ENCODE measurements at regions of chr1 and their contacts with region 1.

Region 1: DNA sequence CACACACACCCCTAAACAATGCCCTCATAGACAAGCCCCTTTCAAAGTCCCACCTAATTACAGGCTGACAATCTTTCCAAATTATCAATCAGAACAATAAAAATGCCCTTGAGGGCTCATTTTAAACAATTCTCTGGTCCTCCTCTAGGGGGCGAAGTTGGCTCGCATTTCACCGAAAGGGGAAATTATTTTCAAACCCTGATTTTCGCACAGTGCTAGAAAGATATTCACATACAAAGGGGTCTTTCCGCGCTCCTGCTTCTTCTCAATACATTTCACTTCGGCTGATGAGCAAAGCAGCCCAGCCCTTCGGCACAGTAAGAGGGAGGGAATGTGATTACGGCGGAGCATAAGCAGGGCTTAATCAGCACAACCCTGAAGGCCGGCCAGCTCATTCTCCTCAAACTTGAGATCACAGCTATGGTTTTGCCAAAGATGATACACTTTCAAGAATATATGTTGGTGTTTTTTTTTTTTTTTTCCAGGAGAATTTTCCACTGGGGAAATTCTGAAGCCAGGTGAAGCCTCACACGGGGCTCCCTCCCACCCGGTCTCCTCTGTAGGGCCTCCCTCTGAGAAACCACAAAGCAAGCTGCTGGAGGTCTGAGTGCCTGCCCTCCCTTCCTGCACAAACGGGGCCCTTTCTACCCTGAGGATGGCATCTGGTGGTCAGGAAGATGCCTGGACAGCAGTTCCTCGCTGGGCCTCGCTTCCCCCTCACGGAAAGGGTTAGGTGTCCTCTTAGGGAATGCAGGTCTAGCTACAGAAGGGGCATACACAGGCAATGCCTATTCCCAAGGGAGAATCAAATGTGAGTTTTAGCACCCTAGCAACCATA is 66.9 kb downstream of the GNG12 start:
- DNase-seq: no peak
- H3K4me3 ChIP-seq: peak overlapping the region in 3 of 4 donors; percentile 12 to 24 (median 23)
- H3K27ac ChIP-seq: peak overlapping the region in 3 of 4 donors; percentile 25 to 56 (median 50)
- H3K4me1 ChIP-seq: peaks cover 0 to 26% (median 6%) of the 10 kb centered on the region in 4 donors
- H3K27me3 ChIP-seq: no peaks in the 10 kb centered on the region
- CTCF ChIP-seq: peak; percentile 80 to 87 (median 84)
- EP300 ChIP-seq: no peak
- POLR2A ChIP-seq: no peak

Region 2: GRCh38 chr1:67780637-67781036 is 14.3 kb after region 1 on chr1:
- intact Hi-C with region 1: no loop called
- DNase-seq: peak; percentile 77
- H3K4me3 ChIP-seq: no peak overlapping the region
- H3K27ac ChIP-seq: peak overlapping the region in 2 of 4 donors; percentile 1 to 11
- H3K4me1 ChIP-seq: peaks cover 0 to 22% (median 8%) of the 10 kb centered on the region in 4 donors
- H3K27me3 ChIP-seq: no peaks in the 10 kb centered on the region
- CTCF ChIP-seq: no peak
- EP300 ChIP-seq: no peak
- POLR2A ChIP-seq: no peak

Region 3: DNA sequence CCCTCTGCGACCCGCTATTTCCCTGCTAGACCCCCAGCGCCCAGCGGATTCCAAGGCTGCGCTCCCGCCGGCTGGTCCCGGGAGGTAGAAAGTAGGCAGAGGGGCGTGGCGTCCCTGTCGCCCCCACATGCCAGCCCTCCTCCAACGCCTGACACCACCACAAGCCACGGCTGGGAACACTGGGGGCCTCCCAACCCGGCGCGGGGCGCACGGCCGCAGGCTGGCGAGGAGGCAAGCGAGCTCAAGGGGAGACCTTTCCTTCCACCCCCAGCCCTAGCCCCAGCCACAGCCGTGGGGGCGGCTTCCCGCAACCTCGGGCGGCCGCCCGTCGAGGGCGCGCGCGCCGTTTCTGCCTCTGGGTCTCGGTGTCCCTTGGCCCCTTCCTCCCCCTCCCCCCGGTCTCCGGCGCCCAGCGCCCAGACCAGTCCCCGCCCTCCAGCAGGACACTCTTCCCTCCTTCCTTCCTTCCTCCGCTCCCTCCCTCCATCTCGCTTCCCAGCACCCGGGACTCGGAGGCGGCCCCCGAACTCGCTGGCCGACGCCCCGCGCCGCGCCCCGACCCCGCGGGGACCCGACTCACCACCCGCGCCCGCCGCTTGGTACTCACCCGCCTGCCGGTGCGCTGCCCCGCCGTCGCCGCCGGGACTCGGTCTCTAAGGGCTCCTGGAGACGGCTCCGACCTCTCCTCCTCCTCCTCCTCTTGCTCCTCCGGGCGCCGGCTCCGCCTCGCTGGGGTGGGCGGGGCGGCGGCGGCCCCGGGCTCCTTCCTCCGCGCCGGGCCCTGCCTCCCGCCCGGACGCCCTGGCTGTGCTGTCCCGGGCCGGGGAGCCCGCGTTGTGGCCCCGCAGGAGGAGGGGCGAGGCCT is 66.6 kb after region 1 on chr1 and contains the start of gene GNG12:
- intact Hi-C with region 1: loop called (anchors 2 kb)
- DNase-seq: peak; percentile 89
- H3K4me3 ChIP-seq: peak within 1 kb of the TSS; percentile 67 to 78 (median 72)
- H3K27ac ChIP-seq: peak within 1 kb of the TSS; percentile 81 to 92 (median 84)
- H3K4me1 ChIP-seq: peaks cover 0 to 32% (median 18%) of the 10 kb centered on the region in 4 donors
- H3K27me3 ChIP-seq: no peaks in the 10 kb centered on the region
- CTCF ChIP-seq: no peak
- EP300 ChIP-seq: no peak
- POLR2A ChIP-seq: no peak
- total RNA-seq, gene GNG12: 41.9 to 58.2 (median 46.7) TPM

Region 4: DNA sequence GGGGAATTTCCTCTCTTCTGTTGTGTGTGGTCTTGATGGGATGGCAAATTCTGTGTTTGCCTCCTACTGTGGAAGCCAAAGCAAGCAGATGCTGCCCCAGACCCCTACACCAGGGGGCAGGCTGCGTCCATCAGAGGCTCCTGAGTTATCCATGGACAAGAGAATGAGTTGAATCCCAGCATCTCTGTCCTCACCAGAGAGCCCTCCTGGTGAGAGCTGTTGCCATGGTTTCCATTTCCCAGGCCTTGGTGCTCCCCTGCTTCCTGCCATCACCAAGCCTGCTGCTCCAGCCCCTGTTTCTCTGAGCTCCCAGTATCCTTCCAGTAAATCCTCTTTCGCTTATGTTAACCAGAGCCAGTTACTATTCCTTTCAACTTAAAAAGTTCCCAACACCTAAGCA is 87.3 kb after region 1 on chr1:
- intact Hi-C with region 1: loop called (anchors 5 kb)
- DNase-seq: no peak
- H3K4me3 ChIP-seq: no peak overlapping the region
- H3K27ac ChIP-seq: no peak overlapping the region
- H3K4me1 ChIP-seq: peaks cover 0 to 13% (median 11%) of the 10 kb centered on the region in 4 donors
- H3K27me3 ChIP-seq: no peaks in the 10 kb centered on the region
- CTCF ChIP-seq: peak in 3 of 4 experiments; percentile 41 to 69 (median 52)
- EP300 ChIP-seq: no peak
- POLR2A ChIP-seq: no peak

Region 5: DNA sequence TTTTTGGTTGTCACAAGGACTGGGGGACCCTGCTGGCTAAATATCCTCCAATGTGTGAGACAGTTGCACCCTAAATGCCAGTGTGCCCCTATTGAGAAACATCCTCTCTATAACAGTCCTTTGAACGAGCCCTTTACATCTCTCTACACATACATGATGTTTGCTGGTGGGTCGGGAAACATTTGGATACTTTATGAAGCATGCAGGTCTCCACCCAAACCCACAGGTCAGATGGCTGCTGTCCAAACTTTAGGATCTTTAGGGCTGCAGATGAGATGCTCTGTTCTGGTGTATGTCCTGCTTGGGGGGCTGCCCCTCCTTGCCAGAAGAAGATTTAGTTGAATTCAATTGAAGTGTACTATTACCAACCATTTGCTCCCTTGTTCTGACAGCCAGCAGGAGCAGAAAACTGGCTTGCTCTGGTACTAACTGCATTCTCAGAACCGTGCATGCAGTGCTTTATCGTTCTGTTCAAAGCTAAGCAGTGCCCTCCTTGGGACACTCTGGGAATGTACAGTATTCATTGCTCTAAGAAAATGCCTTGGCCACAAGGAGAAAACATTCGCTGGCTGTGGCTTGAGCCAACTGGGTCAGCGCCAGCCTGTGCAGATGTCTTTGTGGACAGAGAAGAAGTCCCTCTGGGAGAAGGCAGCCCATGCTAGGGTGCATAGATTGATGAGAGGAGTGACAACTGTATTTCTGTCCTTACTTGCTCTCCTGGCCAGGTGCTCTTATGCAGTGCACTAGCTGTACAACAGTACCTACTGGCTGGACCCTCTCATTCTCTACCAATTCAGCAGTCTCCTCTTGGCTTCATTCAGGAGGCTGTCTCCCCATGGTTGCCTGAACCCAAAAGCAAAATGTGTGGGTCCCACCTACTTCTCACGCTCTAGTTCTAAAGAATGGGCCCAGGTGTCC is 345.4 kb after region 1 on chr1:
- intact Hi-C with region 1: loop called (anchors 2 kb)
- DNase-seq: peak; percentile 88
- H3K4me3 ChIP-seq: no peak overlapping the region
- H3K27ac ChIP-seq: peak overlapping the region in 3 of 4 donors; percentile 10 to 53 (median 24)
- H3K4me1 ChIP-seq: peaks cover 0 to 29% (median 21%) of the 10 kb centered on the region in 4 donors
- H3K27me3 ChIP-seq: no peaks in the 10 kb centered on the region
- CTCF ChIP-seq: peak; percentile 50 to 69 (median 56)
- EP300 ChIP-seq: peak in 1 of 4 donors; percentile 13
- POLR2A ChIP-seq: no peak

Measured in sigmoid colon (tissue), 7 donors.